ENCODE measurements at regions of chr16 and their contacts with region 1.

Region 1: GRCh38 chr16:13957197-13958078 is 37.5 kb downstream of the ERCC4 start:
- DNase-seq: peak; percentile 95
- ATAC-seq: peak; percentile 89
- H3K4me3 ChIP-seq: peak overlapping the region; percentile 32; the same call in 1 of the 2 replicates
- H3K27ac ChIP-seq: peak overlapping the region; percentile 94
- H3K4me1 ChIP-seq: peaks cover 5% of the 10 kb centered on the region
- H3K27me3 ChIP-seq: no peaks in the 10 kb centered on the region
- CTCF ChIP-seq: no peak
- POLR2A ChIP-seq: no peak
- RAD21 ChIP-seq: no peak

Region 2: DNA sequence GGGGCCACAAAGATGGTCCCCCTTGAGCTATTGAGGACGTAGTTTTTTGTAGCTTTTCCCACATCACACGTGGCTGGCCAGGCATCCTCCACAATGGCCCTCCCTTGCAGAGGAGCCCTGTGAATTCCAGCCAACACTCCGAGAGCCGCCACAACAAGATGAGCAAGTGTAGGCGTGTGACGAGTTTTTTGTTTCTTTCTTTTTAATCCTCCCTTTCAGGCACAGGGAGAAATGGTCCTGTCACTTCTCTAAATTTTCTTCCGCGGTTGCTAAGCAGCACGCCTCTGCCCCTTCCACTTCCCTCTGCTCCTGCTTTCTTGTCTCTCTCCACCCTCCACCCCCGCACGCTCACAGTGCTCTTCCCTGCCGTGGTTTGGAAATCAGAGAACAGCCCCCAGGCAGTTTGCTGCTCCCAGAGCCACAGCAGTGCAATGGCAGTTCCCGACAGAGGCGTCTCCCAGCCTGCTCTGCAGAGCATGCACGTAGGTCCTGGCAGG is 45.7 kb after region 1 on chr16:
- CTCF ChIA-PET with region 1: no interaction called
- POLR2A ChIA-PET with region 1: interaction called, 3 read pairs
- dilution Hi-C with region 1: no loop called
- in situ Hi-C with region 1: no loop called
- intact Hi-C with region 1: loop called (anchors 1 kb)
- DNase-seq: peak; percentile 72
- ATAC-seq: peak; percentile 94
- H3K4me3 ChIP-seq: peak overlapping the region; percentile 15
- H3K27ac ChIP-seq: no peak overlapping the region
- H3K4me1 ChIP-seq: no peaks in the 10 kb centered on the region
- H3K27me3 ChIP-seq: peaks cover 9% of the 10 kb centered on the region
- CTCF ChIP-seq: no peak; the same call in 1 of the 2 replicates
- POLR2A ChIP-seq: no peak
- RAD21 ChIP-seq: peak; percentile 17; the same call in 1 of the 2 replicates

Measured in IMR-90 (cell line).